Caco-2 (cell line): ENCODE measurements at regions of chr6 and their contacts with region 1.

Region 1: GRCh38 chr6:117346142-117346930 is 79.4 kb downstream of the ROS1 start:
- DNase-seq: no peak
- H3K4me3 ChIP-seq: no peak overlapping the region
- H3K4me3 Mint-ChIP-seq: no peak overlapping the region
- H3K27ac Mint-ChIP-seq: no peak overlapping the region
- H3K4me1 ChIP-seq: no peaks in the 10 kb centered on the region
- H3K4me1 Mint-ChIP-seq: no peaks in the 10 kb centered on the region
- H3K27me3 ChIP-seq: no peaks in the 10 kb centered on the region
- H3K27me3 Mint-ChIP-seq: peaks cover 6% of the 10 kb centered on the region
- CTCF ChIP-seq: peak in 1 of 2 experiments; percentile 9

Region 2: DNA sequence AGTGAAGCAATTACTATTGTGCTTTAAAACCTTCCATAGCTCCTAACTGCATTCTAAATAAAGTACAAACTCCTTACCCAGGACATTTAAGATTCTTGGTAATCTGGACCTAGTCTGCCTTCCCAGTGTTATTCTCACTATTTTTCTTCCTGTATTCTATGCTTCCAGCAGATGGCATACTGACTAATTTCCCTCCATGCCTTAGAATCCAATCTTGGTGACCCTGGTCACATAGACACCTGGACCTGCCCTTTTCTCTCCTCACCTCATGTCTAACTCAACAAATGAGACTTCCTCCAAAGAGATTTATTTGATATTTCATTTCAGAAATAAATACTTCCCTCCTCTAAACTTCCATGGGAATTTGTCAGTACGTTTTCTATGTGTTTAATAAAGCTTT is 53.6 kb after region 1 on chr6:
- CTCF ChIA-PET with region 1: no interaction called
- POLR2A ChIA-PET with region 1: no interaction called
- intact Hi-C with region 1: loop called (anchors 2 kb)
- DNase-seq: peak in 1 of 2 experiments; percentile 15
- H3K4me3 ChIP-seq: no peak overlapping the region
- H3K4me3 Mint-ChIP-seq: no peak overlapping the region
- H3K27ac Mint-ChIP-seq: no peak overlapping the region
- H3K4me1 ChIP-seq: no peaks in the 10 kb centered on the region
- H3K4me1 Mint-ChIP-seq: no peaks in the 10 kb centered on the region
- H3K27me3 ChIP-seq: no peaks in the 10 kb centered on the region
- H3K27me3 Mint-ChIP-seq: no peaks in the 10 kb centered on the region
- CTCF ChIP-seq: peak; percentile 29 to 48

Region 3: GRCh38 chr6:117555882-117556498 is 209.7 kb after region 1 on chr6:
- CTCF ChIA-PET with region 1: no interaction called
- POLR2A ChIA-PET with region 1: no interaction called
- intact Hi-C with region 1: loop called (anchors 5 kb)
- DNase-seq: peak in 1 of 2 experiments; percentile 58
- H3K4me3 ChIP-seq: no peak overlapping the region
- H3K4me3 Mint-ChIP-seq: no peak overlapping the region
- H3K27ac Mint-ChIP-seq: no peak overlapping the region
- H3K4me1 ChIP-seq: peaks cover 24% of the 10 kb centered on the region
- H3K4me1 Mint-ChIP-seq: no peaks in the 10 kb centered on the region
- H3K27me3 ChIP-seq: no peaks in the 10 kb centered on the region
- H3K27me3 Mint-ChIP-seq: no peaks in the 10 kb centered on the region
- CTCF ChIP-seq: peak; percentile 60 to 82

Region 4: DNA sequence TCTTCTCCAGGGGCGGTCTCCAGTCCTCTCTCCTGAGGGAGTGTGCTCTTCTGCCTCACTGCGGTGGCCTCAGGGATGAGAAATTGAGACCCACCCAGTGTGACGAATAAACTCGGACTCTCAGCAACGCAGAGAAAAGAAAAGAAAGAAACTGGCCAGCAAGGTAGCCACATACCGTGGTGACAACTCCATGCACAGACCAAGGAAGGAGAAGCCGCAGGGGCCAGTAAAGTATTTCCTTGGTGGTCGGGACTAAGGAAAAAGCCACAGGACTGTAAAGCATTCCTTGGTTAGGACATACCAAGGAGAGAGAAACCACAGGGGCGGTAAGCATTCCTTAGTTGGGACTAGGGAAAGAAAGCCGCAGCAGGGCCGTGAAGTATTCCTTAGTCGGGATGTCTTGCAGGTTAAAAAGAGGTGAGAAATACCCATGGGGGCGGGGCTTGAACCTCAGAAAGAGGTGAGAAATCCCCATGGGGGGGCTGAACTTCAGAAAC is 269.6 kb after region 1 on chr6:
- CTCF ChIA-PET with region 1: no interaction called
- POLR2A ChIA-PET with region 1: no interaction called
- intact Hi-C with region 1: no loop called
- DNase-seq: no peak
- H3K4me3 ChIP-seq: no peak overlapping the region
- H3K4me3 Mint-ChIP-seq: no peak overlapping the region
- H3K27ac Mint-ChIP-seq: no peak overlapping the region
- H3K4me1 ChIP-seq: no peaks in the 10 kb centered on the region
- H3K4me1 Mint-ChIP-seq: no peaks in the 10 kb centered on the region
- H3K27me3 ChIP-seq: no peaks in the 10 kb centered on the region
- H3K27me3 Mint-ChIP-seq: no peaks in the 10 kb centered on the region
- CTCF ChIP-seq: no peak

Region 5: GRCh38 chr6:117711369-117711768 is 365.0 kb after region 1 on chr6:
- CTCF ChIA-PET with region 1: no interaction called
- POLR2A ChIA-PET with region 1: no interaction called
- intact Hi-C with region 1: loop called (anchors 2 kb)
- DNase-seq: peak; percentile 35 to 39
- H3K4me3 ChIP-seq: no peak overlapping the region
- H3K4me3 Mint-ChIP-seq: no peak overlapping the region
- H3K27ac Mint-ChIP-seq: no peak overlapping the region
- H3K4me1 ChIP-seq: no peaks in the 10 kb centered on the region
- H3K4me1 Mint-ChIP-seq: no peaks in the 10 kb centered on the region
- H3K27me3 ChIP-seq: no peaks in the 10 kb centered on the region
- H3K27me3 Mint-ChIP-seq: no peaks in the 10 kb centered on the region
- CTCF ChIP-seq: peak; percentile 16 to 28

Region 6: DNA sequence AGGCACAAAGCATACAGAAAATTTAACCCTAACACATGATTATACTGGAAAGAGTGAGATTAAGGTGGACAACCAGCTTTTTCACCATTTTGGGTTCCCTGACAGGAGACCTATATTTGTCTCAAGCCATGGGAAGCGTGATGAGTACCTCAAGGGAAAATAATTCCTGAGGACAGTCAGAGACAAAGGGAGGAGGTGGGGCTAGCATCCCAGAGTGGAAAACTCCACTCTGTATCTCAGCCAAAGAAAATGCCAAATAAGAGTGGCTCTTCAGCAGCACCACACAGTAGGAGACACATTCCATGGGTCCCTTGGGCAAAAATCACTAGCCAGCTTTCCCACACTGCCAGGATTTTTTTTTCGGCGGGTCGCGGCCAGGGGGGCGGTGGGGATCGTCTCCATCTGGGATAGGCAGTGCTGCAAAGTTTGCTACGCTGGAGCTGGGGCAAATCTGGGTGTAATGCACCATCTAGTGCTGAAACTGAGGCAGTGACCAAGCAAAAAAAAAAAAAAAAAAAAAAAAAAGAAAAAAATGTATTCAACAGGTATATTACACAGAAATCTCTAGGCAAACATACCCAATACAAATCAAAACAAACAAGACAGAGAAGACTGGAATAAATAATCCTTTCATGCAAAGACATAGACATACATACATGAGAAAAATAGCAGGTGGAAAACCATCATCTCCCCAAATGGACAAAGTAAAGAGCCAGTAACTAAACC is 483.4 kb after region 1 on chr6:
- CTCF ChIA-PET with region 1: no interaction called
- POLR2A ChIA-PET with region 1: no interaction called
- intact Hi-C with region 1: loop called (anchors 2 kb)
- DNase-seq: peak in 1 of 2 experiments; percentile 41
- H3K4me3 ChIP-seq: peak overlapping the region; percentile 9; the same call in 1 of the 2 replicates
- H3K4me3 Mint-ChIP-seq: peak overlapping the region; percentile 62
- H3K27ac Mint-ChIP-seq: no peak overlapping the region
- H3K4me1 ChIP-seq: no peaks in the 10 kb centered on the region
- H3K4me1 Mint-ChIP-seq: no peaks in the 10 kb centered on the region
- H3K27me3 ChIP-seq: no peaks in the 10 kb centered on the region
- H3K27me3 Mint-ChIP-seq: peaks cover 5% of the 10 kb centered on the region
- CTCF ChIP-seq: peak; percentile 52 to 56